ENCODE measurements at regions of chr10 and their contacts with region 1.

Region 1: DNA sequence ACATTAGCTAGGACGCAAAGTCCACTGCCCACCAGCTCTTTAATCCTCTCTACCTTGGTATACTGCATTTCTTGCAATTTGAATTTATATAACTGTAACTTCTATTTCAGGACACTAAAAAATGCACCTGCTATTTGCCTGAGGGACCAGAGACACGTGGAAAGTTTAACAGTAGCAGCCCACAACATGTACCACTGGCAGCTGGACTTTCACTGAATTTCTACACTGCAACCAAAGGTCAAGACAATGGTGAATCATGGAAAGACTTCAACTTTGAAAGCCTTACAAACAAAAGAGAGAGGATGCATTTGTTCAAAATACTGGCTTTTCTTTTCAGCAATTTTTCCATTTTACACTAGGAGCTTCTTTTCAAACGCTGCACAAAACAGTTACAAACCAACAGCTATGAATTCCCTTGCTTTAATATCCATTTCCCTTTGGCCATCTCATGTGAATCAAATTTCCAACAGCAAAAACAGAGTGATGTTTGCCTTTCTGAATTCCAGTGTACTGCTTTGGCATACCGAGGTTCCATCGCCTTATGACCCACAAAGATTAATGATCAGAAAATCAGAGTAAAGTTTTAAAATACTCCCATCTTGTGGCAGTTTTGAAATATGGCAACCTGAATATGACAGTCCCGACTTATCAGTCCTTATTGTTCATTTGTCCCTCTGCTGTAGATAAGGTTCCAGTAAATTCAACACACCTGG is 29.9 kb upstream of the HNRNPH3 start:
- DNase-seq: no peak
- ATAC-seq: peak; percentile 62 to 86 (median 67)
- H3K4me3 ChIP-seq: no peak overlapping the region
- H3K27ac ChIP-seq: no peak overlapping the region
- H3K4me1 ChIP-seq: no peaks in the 10 kb centered on the region
- H3K27me3 ChIP-seq: no peaks in the 10 kb centered on the region
- CTCF ChIP-seq: peak; percentile 63

Region 2: GRCh38 chr10:67849331-67850011 is 452.5 kb before region 1 on chr10:
- intact Hi-C with region 1: loop called in 1 of 2 experiments (anchors 10 kb)
- DNase-seq: peak; percentile 96 to 98
- ATAC-seq: peak; percentile 98 to 100 (median 98)
- H3K4me3 ChIP-seq: peak overlapping the region; percentile 96
- H3K27ac ChIP-seq: peak overlapping the region; percentile 99
- H3K4me1 ChIP-seq: peaks cover 5% of the 10 kb centered on the region
- H3K27me3 ChIP-seq: no peaks in the 10 kb centered on the region
- CTCF ChIP-seq: peak; percentile 36

Region 3: GRCh38 chr10:68043030-68043429 is 258.9 kb before region 1 on chr10:
- intact Hi-C with region 1: no loop called
- DNase-seq: no peak
- ATAC-seq: no peak
- H3K4me3 ChIP-seq: no peak overlapping the region
- H3K27ac ChIP-seq: no peak overlapping the region
- H3K4me1 ChIP-seq: no peaks in the 10 kb centered on the region
- H3K27me3 ChIP-seq: no peaks in the 10 kb centered on the region
- CTCF ChIP-seq: no peak

Region 4: GRCh38 chr10:68082872-68083271 is 219.1 kb before region 1 on chr10:
- intact Hi-C with region 1: loop called in 1 of 2 experiments (anchors 10 kb)
- DNase-seq: no peak
- ATAC-seq: peak in 2 of 4 donors; percentile 52 to 63
- H3K4me3 ChIP-seq: no peak overlapping the region
- H3K27ac ChIP-seq: peak overlapping the region; percentile 38
- H3K4me1 ChIP-seq: peaks cover 31% of the 10 kb centered on the region
- H3K27me3 ChIP-seq: no peaks in the 10 kb centered on the region
- CTCF ChIP-seq: peak; percentile 56

Region 5: GRCh38 chr10:68212721-68213352 is 89.1 kb before region 1 on chr10:
- intact Hi-C with region 1: loop called in 1 of 2 experiments (anchors 5 kb)
- DNase-seq: no peak
- ATAC-seq: no peak
- H3K4me3 ChIP-seq: no peak overlapping the region
- H3K27ac ChIP-seq: no peak overlapping the region
- H3K4me1 ChIP-seq: peaks cover 8% of the 10 kb centered on the region
- H3K27me3 ChIP-seq: no peaks in the 10 kb centered on the region
- CTCF ChIP-seq: peak; percentile 45

Region 6: GRCh38 chr10:68239596-68240150 is 62.3 kb before region 1 on chr10:
- intact Hi-C with region 1: loop called in 1 of 2 experiments (anchors 10 kb)
- DNase-seq: no peak
- ATAC-seq: no peak
- H3K4me3 ChIP-seq: no peak overlapping the region
- H3K27ac ChIP-seq: no peak overlapping the region
- H3K4me1 ChIP-seq: no peaks in the 10 kb centered on the region
- H3K27me3 ChIP-seq: no peaks in the 10 kb centered on the region
- CTCF ChIP-seq: no peak